ENCODE measurements at regions of chr1 and their contacts with region 1.

Region 1: DNA sequence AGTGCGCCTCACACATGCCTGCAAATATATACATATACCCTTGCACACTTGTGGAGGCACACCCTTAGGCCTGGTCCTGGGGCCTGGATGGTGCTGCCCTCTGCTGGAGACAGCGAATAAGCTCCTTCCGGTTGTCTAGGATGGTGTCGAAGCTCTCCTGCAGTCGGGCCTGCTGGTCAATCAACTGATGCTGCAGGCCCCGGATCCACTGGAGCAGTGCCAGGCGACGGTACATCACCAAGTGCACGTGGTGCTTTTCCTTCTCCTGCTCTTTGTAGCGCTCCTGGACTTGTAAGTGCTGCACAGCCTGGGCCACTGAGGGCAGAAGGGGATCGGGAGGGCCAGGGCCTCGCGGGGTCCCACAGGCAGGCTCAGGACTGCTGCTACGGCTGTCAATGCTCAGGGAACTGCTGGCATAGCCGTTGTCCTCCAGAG is 3.1 kb downstream of the C1orf216 start:
- DNase-seq: peak; percentile 85
- CTCF ChIP-seq: peak; percentile 86

Region 2: GRCh38 chr1:35451125-35451528 is 264.5 kb before region 1 on chr1:
- CTCF ChIA-PET with region 1: interaction called, 27 read pairs
- POLR2A ChIA-PET with region 1: no interaction called
- DNase-seq: peak; percentile 70
- CTCF ChIP-seq: peak; percentile 92

Region 3: GRCh38 chr1:35539073-35539823 is 176.3 kb before region 1 on chr1:
- CTCF ChIA-PET with region 1: no interaction called
- POLR2A ChIA-PET with region 1: no interaction called
- DNase-seq: no peak
- CTCF ChIP-seq: no peak

Region 4: GRCh38 chr1:35605882-35606182 is 109.8 kb before region 1 on chr1:
- CTCF ChIA-PET with region 1: interaction called, 32 read pairs
- POLR2A ChIA-PET with region 1: no interaction called
- DNase-seq: no peak
- CTCF ChIP-seq: no peak

Region 5: GRCh38 chr1:35702508-35702907 is 13.1 kb before region 1 on chr1:
- CTCF ChIA-PET with region 1: interaction called, 59 read pairs
- POLR2A ChIA-PET with region 1: interaction called, 4 read pairs
- DNase-seq: no peak
- CTCF ChIP-seq: no peak

Region 6: GRCh38 chr1:35747938-35748702 is 32.5 kb after region 1 on chr1:
- CTCF ChIA-PET with region 1: interaction called, 27 read pairs
- POLR2A ChIA-PET with region 1: no interaction called
- DNase-seq: no peak
- CTCF ChIP-seq: no peak

Region 7: GRCh38 chr1:35777109-35777508 is 61.5 kb after region 1 on chr1:
- CTCF ChIA-PET with region 1: interaction called, 15 read pairs
- POLR2A ChIA-PET with region 1: no interaction called
- DNase-seq: no peak
- CTCF ChIP-seq: no peak

Region 8: DNA sequence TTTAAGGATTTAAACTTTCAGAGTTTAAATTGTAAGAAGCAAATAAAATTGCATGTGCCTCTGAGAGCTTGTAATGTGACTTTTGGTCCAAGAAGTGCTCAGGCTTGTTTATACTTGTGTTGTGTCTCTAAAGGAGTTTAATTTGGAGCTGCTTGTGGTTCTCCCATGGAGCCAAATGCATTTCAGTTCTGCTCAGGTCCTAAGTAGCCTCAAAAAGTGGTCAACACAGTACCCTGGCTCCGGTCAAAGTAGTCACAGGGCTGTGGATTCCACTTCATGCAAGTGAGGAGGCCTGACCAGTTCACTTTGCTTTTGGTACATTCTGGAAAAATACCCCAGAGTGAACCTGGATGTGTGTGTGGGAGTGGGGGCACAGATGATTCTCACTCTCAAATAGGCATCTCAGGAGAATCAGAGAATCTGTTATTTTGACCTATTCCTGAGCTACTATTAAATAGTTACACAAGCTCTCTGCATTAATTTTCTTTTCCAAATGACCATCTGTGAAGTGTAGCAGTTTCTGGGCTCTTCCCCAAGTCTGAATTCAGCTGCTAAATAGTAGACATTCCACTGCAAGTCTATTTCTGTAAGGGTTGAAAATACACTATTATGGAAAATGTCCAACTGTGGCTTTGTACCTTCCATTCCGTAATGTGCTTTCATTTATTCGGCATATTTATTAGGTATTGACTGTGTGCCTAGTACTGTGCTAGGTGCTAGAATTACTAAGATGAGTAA is 135.7 kb after region 1 on chr1:
- CTCF ChIA-PET with region 1: no interaction called
- POLR2A ChIA-PET with region 1: no interaction called
- DNase-seq: no peak
- CTCF ChIP-seq: no peak

Region 9: GRCh38 chr1:35864813-35865212 is 149.2 kb after region 1 on chr1:
- CTCF ChIA-PET with region 1: no interaction called
- POLR2A ChIA-PET with region 1: no interaction called
- DNase-seq: no peak
- CTCF ChIP-seq: no peak